Dorsolateral prefrontal cortex (tissue), 120 donors: ENCODE measurements at regions of chr22 and their contacts with region 1.

Region 1: GRCh38 chr22:21629262-21630149 is at the start of gene YDJC:
- DNase-seq: peak; percentile 46 to 95 (median 91)
- H3K4me3 ChIP-seq: peak within 1 kb of the TSS; percentile 56 to 96 (median 88)
- H3K27ac ChIP-seq: peak within 1 kb of the TSS in 48 of 59 donors; percentile 1 to 88 (median 62)
- H3K27me3 ChIP-seq: no peaks in the 10 kb centered on the region
- CTCF ChIP-seq: peak in 42 of 56 donors; percentile 8 to 98 (median 48)
- total RNA-seq, gene YDJC: 9.3 to 19.5 (median 14.6) TPM

Region 2: GRCh38 chr22:21102659-21103267 is 526.7 kb before region 1 on chr22:
- intact Hi-C with region 1: no loop called
- DNase-seq: peak; percentile 63 to 91 (median 74)
- H3K4me3 ChIP-seq: peak overlapping the region in 50 of 59 donors; percentile 7 to 58 (median 40)
- H3K27ac ChIP-seq: peak overlapping the region in 1 of 59 donors; percentile 36
- H3K27me3 ChIP-seq: peaks cover 0 to 2% (median 0%) of the 10 kb centered on the region in 45 donors
- CTCF ChIP-seq: peak; percentile 53 to 91 (median 78)

Region 3: DNA sequence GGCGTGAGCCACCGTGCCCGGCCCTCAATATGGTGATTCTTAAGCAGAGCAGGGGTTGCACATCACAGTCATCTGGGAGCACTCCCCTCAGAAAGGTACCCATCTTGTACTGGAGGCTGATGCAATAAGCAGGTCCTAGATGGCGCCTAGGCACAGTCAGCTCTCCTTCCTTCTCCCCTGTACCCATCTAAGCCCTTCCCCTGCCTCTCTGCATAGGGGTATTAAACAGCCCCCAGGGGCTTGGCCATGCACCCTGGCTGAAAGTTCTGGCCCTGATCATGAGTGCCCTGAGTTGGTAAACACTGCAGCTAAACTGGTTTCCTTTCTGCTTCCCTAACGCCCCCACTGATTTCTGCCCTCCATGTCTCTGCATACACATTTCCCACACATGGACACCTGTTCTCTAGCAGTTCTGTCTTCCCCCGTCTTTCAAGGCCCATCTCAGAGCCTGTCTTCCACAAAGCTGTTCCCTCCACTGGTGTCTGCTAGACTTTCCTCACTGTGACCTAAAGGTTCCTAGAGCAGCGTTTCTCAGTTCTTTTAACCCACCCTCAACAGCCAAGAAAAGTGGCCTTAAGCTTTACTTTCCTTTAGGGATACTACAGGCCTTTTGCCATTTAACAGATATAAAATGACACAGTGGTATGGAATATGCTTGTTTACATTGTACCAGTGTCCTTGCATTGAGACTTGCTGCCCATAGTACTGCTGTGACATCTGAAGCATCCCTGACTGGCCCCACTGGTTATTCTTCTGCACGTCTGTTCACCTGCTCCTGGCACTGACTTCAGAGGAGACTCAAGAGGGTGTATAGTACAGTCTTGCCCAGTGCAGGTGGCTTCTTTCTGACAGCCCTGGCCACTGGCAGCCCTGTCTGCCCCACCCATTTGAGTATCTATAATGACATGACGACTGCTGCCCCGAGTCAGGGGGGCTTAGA is 46.4 kb before region 1 on chr22:
- intact Hi-C with region 1: no loop called
- DNase-seq: peak in 1 of 10 donors; percentile 36
- H3K4me3 ChIP-seq: no peak overlapping the region
- H3K27ac ChIP-seq: peak overlapping the region in 31 of 59 donors; percentile 2 to 77 (median 45)
- H3K27me3 ChIP-seq: no peaks in the 10 kb centered on the region
- CTCF ChIP-seq: no peak

Region 4: GRCh38 chr22:21593406-21594232 is 35.9 kb before region 1 on chr22:
- intact Hi-C with region 1: loop called in 1 of 2 experiments (anchors 5 kb)
- DNase-seq: peak in 5 of 10 donors; percentile 15 to 48 (median 42)
- H3K4me3 ChIP-seq: no peak overlapping the region
- H3K27ac ChIP-seq: peak overlapping the region in 11 of 59 donors; percentile 4 to 51 (median 31)
- H3K27me3 ChIP-seq: no peaks in the 10 kb centered on the region
- CTCF ChIP-seq: peak in 30 of 56 donors; percentile 7 to 43 (median 27)